ENCODE measurements at regions of chr2 and their contacts with region 1.

Region 1: DNA sequence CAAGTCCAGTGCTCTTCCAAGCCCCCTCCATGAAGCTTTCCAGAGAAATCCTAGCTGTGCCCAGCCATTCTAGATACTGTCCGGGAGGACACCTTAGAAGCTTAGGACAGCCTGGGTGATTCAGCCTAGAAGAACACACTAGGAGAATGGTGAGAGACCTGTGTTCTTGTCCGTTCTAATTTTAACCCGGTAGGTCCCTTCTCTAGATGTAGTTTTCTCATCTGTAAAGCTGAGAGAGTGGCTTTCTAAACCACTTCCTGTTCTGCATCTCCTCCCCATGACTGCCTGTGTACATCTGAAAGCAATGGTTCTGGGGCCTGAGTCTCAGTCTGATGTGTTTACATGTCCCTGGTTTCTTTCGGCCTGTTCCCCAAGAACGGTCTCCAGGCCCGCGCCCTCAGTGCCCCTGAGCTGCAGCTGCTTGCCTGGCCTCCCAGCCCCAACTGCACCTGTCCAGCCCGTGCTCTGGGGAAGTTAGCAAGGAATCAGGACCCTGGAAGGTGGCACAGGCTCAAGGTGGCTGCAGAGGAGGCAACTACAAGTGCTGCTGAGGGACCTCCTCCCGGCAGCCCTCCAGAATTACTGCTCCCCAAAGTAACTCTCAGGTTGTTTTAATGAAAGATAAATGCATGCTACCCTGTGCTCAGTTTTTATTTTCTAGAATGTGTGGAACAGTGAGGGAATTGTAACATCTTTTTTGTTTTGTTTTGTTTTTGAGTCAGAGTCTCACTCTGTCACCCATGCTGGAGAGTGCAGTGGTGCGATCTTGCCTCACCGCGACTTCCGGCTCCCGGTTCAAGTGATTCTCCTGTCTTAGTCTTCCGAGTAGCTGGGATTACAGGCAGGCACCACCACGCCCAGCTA is 105.9 kb downstream of the LBH start:
- DNase-seq: peak; percentile 77
- H3K4me3 Mint-ChIP-seq: peak overlapping the region; percentile 68
- H3K27ac Mint-ChIP-seq: peak overlapping the region; percentile 99
- H3K4me1 Mint-ChIP-seq: peaks cover 76% of the 10 kb centered on the region
- H3K27me3 Mint-ChIP-seq: no peaks in the 10 kb centered on the region

Region 2: DNA sequence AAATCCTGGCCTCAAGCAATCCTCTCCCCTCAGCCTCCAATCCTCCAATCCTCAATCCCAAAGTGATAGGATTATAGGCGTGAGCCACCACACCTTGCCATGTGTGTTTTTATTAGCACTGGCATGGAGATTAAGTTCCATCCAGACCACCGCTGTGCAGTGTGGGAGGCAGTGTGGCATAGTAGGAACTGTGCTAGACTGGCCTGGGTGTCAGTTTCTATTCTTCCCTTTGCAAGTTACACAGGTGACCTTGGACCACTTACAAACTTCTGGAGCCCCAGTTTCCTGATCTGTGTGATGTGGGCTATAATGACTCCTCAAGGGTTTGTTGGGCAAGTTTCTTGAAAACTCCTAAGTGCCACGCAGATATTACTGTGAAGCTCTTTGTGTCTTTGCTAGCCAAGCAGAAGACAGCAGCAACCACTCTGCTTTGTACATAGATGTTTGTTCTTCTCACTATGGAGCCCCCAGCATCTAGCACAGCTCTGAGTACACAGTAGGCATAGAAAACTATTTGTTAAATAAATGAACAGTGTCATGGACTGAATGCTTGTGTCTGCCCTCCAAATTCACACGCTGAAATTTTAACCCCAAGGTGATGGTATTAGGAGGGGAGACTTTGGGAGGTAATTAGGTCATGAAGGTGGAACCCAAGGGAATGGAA is 12.8 kb before region 1 on chr2:
- CTCF ChIA-PET with region 1: interaction called, 13 read pairs
- POLR2A ChIA-PET with region 1: no interaction called
- DNase-seq: no peak
- H3K4me3 Mint-ChIP-seq: no peak overlapping the region
- H3K27ac Mint-ChIP-seq: no peak overlapping the region
- H3K4me1 Mint-ChIP-seq: peaks cover 15% of the 10 kb centered on the region
- H3K27me3 Mint-ChIP-seq: no peaks in the 10 kb centered on the region

Region 3: DNA sequence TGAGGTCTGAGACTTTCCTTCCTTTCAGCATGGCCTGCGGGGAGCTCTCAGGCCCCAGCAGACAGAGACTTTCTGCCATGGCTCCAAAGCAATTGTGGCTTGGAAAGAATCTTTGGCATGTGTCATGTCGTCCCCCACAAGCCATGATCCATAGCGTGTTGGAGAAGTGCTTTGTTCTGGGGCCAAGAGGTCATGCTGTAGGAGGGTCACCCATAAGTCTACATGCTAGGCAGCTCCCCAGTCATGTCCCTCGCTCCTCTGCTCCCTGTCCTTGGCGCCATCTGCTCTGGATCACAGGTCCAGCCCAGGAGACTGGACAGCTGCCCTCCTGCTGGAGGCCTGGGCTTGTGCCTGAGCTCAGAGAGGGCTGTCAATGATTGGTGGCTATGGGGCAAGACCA is 31.0 kb after region 1 on chr2:
- CTCF ChIA-PET with region 1: interaction called, 15 read pairs
- POLR2A ChIA-PET with region 1: no interaction called
- DNase-seq: no peak
- H3K4me3 Mint-ChIP-seq: no peak overlapping the region
- H3K27ac Mint-ChIP-seq: no peak overlapping the region
- H3K4me1 Mint-ChIP-seq: peaks cover 22% of the 10 kb centered on the region
- H3K27me3 Mint-ChIP-seq: no peaks in the 10 kb centered on the region

Region 4: DNA sequence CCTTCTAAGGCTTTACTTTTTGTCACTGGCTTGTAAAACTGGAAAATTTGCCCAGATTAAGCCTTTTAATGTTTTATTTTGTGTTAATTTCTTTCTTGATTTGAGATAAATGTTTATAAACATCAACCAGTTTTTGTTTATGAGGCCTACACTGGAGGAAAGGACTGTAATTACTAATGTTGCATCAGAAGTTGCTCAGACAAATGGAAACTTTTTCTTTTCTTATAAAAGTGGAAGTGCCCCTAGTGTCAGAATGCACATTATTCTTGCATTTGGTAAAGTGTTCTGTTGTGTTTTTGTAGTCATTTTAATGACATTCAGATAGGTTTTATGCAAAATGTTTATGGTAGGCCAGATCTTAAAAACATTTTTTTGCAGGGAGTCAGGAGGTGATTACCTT is 135.1 kb after region 1 on chr2:
- CTCF ChIA-PET with region 1: no interaction called
- POLR2A ChIA-PET with region 1: no interaction called
- DNase-seq: no peak
- H3K4me3 Mint-ChIP-seq: no peak overlapping the region
- H3K27ac Mint-ChIP-seq: no peak overlapping the region
- H3K4me1 Mint-ChIP-seq: peaks cover 9% of the 10 kb centered on the region
- H3K27me3 Mint-ChIP-seq: no peaks in the 10 kb centered on the region

Measured in activated CD4-positive, alpha-beta T cell treated with anti-CD3 and anti-CD28 coated beads, Interleukin-2, amount 10 ng/mL, durations not matched to agents 7 days and 5 days (primary cell).